B cell (primary cell): ENCODE measurements at regions of chr6 and their contacts with region 1.

Region 1: GRCh38 chr6:149028767-149029405 is 282.1 kb downstream of the UST start:
- DNase-seq: peak; percentile 88
- ATAC-seq: peak; percentile 53
- H3K4me3 ChIP-seq: no peak overlapping the region
- H3K4me3 Mint-ChIP-seq: no peak overlapping the region
- H3K27ac ChIP-seq: no peak overlapping the region
- H3K27ac Mint-ChIP-seq: no peak overlapping the region
- H3K4me1 ChIP-seq: peaks cover 3 to 19% of the 10 kb centered on the region in 2 donors
- H3K4me1 Mint-ChIP-seq: peaks cover 28% of the 10 kb centered on the region
- H3K27me3 ChIP-seq: no peaks in the 10 kb centered on the region
- H3K27me3 Mint-ChIP-seq: no peaks in the 10 kb centered on the region
- CTCF ChIP-seq: peak; percentile 92

Region 2: GRCh38 chr6:149043476-149044130 is 14.7 kb after region 1 on chr6:
- CTCF ChIA-PET with region 1: interaction called, 16 read pairs
- POLR2A ChIA-PET with region 1: interaction called, 3 read pairs
- intact Hi-C with region 1: no loop called
- DNase-seq: no peak
- ATAC-seq: peak; percentile 33
- H3K4me3 ChIP-seq: no peak overlapping the region
- H3K4me3 Mint-ChIP-seq: no peak overlapping the region
- H3K27ac ChIP-seq: no peak overlapping the region
- H3K27ac Mint-ChIP-seq: no peak overlapping the region
- H3K4me1 ChIP-seq: peaks cover 22 to 32% of the 10 kb centered on the region in 2 donors
- H3K4me1 Mint-ChIP-seq: peaks cover 35% of the 10 kb centered on the region
- H3K27me3 ChIP-seq: no peaks in the 10 kb centered on the region
- H3K27me3 Mint-ChIP-seq: no peaks in the 10 kb centered on the region
- CTCF ChIP-seq: peak; percentile 37

Region 3: DNA sequence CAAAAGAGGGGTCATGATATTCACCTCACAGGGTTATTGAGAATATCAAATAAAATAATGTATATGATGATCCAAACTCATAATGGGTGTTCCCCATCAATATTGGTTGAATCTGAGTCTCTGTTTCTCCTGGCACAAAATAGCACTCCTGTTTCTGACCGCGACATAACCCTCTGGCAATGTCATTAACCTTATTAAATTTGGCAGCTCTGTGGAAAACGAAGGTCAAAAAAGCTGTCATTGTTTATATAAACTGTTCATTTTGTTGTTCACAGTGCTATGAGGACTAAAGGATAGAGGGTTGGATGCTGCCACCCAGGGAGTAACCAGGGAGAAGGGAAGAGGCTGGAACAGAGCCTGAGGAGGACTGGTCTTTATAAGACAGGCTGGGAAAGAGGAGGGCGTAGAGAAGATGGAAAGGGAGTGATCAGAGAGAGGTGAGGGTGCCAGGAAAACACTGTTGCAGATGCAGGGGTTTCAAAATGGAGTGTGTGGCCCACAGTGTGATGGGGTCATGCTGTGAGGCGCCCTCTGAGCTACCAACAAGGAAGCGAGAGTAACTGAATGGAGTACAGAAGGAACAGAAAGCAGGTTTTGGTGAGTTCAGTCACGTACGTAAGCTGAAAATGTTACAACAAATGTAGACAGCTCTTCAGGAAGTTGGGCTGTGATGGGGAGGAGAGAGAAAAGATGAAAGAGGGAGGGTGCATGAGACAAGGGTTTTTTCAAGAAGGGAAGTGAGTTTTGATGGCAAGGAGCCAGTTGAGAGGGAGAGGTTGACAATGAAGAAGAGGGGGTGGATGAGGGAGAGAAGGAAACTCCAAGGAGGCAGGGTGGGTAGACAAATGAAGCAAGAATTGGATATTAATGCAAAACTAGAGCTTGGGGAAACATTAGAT is 37.0 kb after region 1 on chr6:
- CTCF ChIA-PET with region 1: interaction called, 8 read pairs
- POLR2A ChIA-PET with region 1: no interaction called
- intact Hi-C with region 1: loop called (anchors 5 kb)
- DNase-seq: peak; percentile 88
- ATAC-seq: peak; percentile 96
- H3K4me3 ChIP-seq: no peak overlapping the region
- H3K4me3 Mint-ChIP-seq: peak overlapping the region; percentile 29
- H3K27ac ChIP-seq: peak overlapping the region; percentile 85 to 86
- H3K27ac Mint-ChIP-seq: peak overlapping the region; percentile 87
- H3K4me1 ChIP-seq: peaks cover 21 to 32% of the 10 kb centered on the region in 2 donors
- H3K4me1 Mint-ChIP-seq: peaks cover 35% of the 10 kb centered on the region
- H3K27me3 ChIP-seq: no peaks in the 10 kb centered on the region
- H3K27me3 Mint-ChIP-seq: no peaks in the 10 kb centered on the region
- CTCF ChIP-seq: no peak

Region 4: DNA sequence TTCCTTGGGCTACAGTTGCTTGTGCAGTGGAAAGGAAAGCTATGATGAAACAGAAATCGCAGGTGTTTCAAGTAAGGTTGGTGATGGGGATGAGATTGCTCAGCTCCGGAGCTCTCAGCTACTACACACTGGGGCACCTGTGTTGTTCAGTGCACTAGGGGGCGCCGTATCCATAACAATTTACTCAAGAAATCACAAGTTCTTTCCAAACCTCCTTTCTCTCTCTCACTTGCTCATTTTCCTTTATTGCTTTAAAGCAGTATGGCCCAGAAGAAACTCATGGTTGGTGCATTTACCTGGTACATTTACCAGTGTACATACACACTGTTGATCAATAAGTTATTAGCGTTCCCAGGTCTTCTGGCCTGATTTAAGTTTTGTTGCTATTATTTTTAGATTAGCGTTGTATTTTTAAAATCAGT is 53.4 kb after region 1 on chr6:
- CTCF ChIA-PET with region 1: interaction called, 13 read pairs
- POLR2A ChIA-PET with region 1: no interaction called
- intact Hi-C with region 1: loop called (anchors 1 kb)
- DNase-seq: peak; percentile 82
- ATAC-seq: peak; percentile 77
- H3K4me3 ChIP-seq: no peak overlapping the region
- H3K4me3 Mint-ChIP-seq: no peak overlapping the region
- H3K27ac ChIP-seq: no peak overlapping the region
- H3K27ac Mint-ChIP-seq: no peak overlapping the region
- H3K4me1 ChIP-seq: peaks cover 0 to 3% of the 10 kb centered on the region in 2 donors
- H3K4me1 Mint-ChIP-seq: peaks cover 7% of the 10 kb centered on the region
- H3K27me3 ChIP-seq: no peaks in the 10 kb centered on the region
- H3K27me3 Mint-ChIP-seq: no peaks in the 10 kb centered on the region
- CTCF ChIP-seq: peak; percentile 93

Region 5: DNA sequence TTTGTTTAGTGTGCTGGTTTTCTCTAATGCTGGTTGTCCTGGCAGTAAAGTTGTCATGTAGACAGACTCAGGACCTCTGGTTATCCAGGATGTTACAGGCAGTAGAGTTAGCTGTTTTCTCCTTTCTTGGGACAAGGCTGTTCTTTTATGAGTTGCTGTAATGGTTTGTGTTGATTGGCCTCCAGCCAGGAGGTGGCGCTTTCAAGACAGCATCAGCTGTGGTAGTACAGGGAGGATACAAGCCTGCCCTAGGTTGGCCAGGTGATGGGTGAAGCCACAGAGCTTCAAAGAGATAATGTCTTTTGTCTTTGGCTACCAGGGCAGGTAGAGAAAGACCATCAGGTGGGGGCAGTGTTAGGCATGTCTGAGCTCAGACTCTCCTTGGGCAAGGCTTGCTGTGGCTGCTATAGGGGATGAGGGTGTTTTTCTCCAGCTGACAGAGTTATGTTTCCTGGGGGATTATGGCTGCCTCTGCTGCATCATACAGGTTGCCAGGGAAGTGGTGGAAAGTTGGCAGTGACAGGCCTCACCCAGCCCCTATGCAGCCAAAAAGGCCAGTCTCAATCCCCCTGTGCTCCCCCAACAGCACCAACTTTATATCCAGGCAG is 161.4 kb after region 1 on chr6:
- CTCF ChIA-PET with region 1: interaction called, 8 read pairs
- POLR2A ChIA-PET with region 1: no interaction called
- intact Hi-C with region 1: loop called (anchors 1 kb)
- DNase-seq: peak; percentile 77
- ATAC-seq: peak; percentile 75
- H3K4me3 ChIP-seq: no peak overlapping the region
- H3K4me3 Mint-ChIP-seq: no peak overlapping the region
- H3K27ac ChIP-seq: no peak overlapping the region
- H3K27ac Mint-ChIP-seq: no peak overlapping the region
- H3K4me1 ChIP-seq: peaks cover 0 to 8% of the 10 kb centered on the region in 2 donors
- H3K4me1 Mint-ChIP-seq: peaks cover 10% of the 10 kb centered on the region
- H3K27me3 ChIP-seq: peaks cover 0 to 3% (median 0%) of the 10 kb centered on the region in 4 experiments
- H3K27me3 Mint-ChIP-seq: no peaks in the 10 kb centered on the region
- CTCF ChIP-seq: peak; percentile 77